Activated naive CD4-positive, alpha-beta T cell treated with anti-CD3 and anti-CD28 coated beads for 36 hours (primary cell): ENCODE measurements at regions of chr4 and their contacts with region 1.

Region 1: GRCh38 chr4:89158884-89159503 is 47.7 kb downstream of the TIGD2 start:
- DNase-seq: no peak
- H3K4me3 Mint-ChIP-seq: no peak overlapping the region
- H3K27ac Mint-ChIP-seq: no peak overlapping the region
- H3K4me1 Mint-ChIP-seq: no peaks in the 10 kb centered on the region
- H3K27me3 Mint-ChIP-seq: peaks cover 4% of the 10 kb centered on the region

Region 2: GRCh38 chr4:88786011-88786410 is 373.0 kb before region 1 on chr4:
- CTCF ChIA-PET with region 1: no interaction called
- intact Hi-C with region 1: no loop called
- DNase-seq: no peak
- H3K4me3 Mint-ChIP-seq: no peak overlapping the region
- H3K27ac Mint-ChIP-seq: no peak overlapping the region
- H3K4me1 Mint-ChIP-seq: no peaks in the 10 kb centered on the region
- H3K27me3 Mint-ChIP-seq: no peaks in the 10 kb centered on the region

Region 3: GRCh38 chr4:89558147-89558546 is 399.2 kb after region 1 on chr4:
- CTCF ChIA-PET with region 1: no interaction called
- intact Hi-C with region 1: loop called (anchors 10 kb)
- DNase-seq: no peak
- H3K4me3 Mint-ChIP-seq: no peak overlapping the region
- H3K27ac Mint-ChIP-seq: no peak overlapping the region
- H3K4me1 Mint-ChIP-seq: peaks cover 3% of the 10 kb centered on the region
- H3K27me3 Mint-ChIP-seq: no peaks in the 10 kb centered on the region

Region 4: GRCh38 chr4:90474484-90474883 is 1315.5 kb after region 1 on chr4:
- CTCF ChIA-PET with region 1: no interaction called
- intact Hi-C with region 1: no loop called
- DNase-seq: no peak
- H3K4me3 Mint-ChIP-seq: no peak overlapping the region
- H3K27ac Mint-ChIP-seq: no peak overlapping the region
- H3K4me1 Mint-ChIP-seq: no peaks in the 10 kb centered on the region
- H3K27me3 Mint-ChIP-seq: no peaks in the 10 kb centered on the region